ENCODE measurements at regions of chr3 and their contacts with region 1.

Region 1: DNA sequence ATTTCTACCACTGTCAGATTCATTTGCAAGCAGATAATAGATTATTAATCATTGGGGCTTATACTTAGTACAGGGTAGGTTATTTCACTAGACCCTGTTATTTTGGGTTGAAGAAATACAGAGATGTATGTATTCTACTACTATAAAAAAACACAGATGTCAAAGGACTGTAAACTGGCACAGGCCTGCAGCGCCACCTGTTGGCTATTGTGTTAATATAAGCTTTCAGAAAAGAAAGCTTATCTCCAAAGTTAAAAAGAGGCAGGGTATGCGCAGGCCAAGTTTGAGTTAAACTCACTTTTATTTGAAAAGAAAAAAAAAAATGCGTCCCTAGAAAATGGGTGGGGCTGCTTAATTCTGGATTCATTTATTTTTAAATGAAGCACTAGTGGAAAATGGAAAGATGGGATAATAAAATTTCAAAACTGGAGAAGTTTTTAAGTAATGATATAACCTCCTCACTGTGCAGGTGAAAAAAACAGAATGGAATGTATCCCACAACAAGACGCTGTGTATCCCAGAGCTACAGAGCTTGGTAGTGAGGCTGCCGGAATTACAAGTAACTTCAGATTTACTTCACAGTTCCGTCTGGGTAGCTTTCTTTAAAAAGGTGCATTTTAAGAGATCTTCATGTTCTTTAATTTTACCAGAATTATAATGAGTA is 407.2 kb upstream of the TGFBR2 start:
- DNase-seq: peak; percentile 43 to 89 (median 68)
- H3K4me3 ChIP-seq: no peak overlapping the region
- H3K27ac ChIP-seq: no peak overlapping the region
- H3K4me1 ChIP-seq: peaks cover 0 to 16% of the 10 kb centered on the region in 2 donors
- H3K27me3 ChIP-seq: no peaks in the 10 kb centered on the region
- CTCF ChIP-seq: peak; percentile 79 to 94 (median 83)
- POLR2A ChIP-seq: no peak

Region 2: DNA sequence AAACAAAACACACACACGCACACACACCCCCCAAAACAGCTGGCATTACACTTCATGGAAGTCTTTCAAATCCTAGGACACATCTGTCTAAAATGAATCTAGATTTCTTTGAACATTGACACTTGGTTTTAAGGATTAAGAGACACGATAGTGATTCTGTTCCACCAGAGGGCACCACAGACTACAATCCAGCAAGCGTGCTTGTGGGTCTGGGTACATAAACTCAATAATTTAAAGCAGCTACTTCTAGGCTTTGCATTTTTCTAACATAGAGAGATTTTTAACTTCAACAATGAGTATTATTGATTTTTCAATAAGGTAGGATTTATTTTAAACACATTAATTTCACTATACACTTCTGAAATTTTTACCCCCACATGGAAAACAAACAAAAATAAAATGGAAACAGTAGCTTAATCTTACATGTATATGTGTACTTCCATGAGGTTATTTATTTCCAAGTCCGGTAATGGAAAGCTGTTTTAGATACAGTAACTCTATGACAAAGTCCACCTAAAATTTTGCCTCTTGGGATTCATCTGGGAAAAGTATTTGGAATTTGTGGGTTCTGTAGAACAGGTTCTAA is 156.9 kb before region 1 on chr3:
- intact Hi-C with region 1: loop called in 1 of 2 experiments (anchors 5 kb)
- DNase-seq: peak; percentile 48 to 78 (median 66)
- H3K4me3 ChIP-seq: no peak overlapping the region
- H3K27ac ChIP-seq: no peak overlapping the region
- H3K4me1 ChIP-seq: no peaks in the 10 kb centered on the region
- H3K27me3 ChIP-seq: no peaks in the 10 kb centered on the region
- CTCF ChIP-seq: peak; percentile 59 to 83 (median 78)
- POLR2A ChIP-seq: no peak

Region 3: GRCh38 chr3:30233924-30234666 is 34.9 kb after region 1 on chr3:
- intact Hi-C with region 1: no loop called
- DNase-seq: no peak
- H3K4me3 ChIP-seq: no peak overlapping the region
- H3K27ac ChIP-seq: peak overlapping the region in 2 of 5 donors; percentile 27 to 56
- H3K4me1 ChIP-seq: peaks cover 0 to 6% of the 10 kb centered on the region in 2 donors
- H3K27me3 ChIP-seq: no peaks in the 10 kb centered on the region
- CTCF ChIP-seq: no peak
- POLR2A ChIP-seq: no peak